Caco-2 (cell line): ENCODE measurements at regions of chr7 and their contacts with region 1.

Region 1: DNA sequence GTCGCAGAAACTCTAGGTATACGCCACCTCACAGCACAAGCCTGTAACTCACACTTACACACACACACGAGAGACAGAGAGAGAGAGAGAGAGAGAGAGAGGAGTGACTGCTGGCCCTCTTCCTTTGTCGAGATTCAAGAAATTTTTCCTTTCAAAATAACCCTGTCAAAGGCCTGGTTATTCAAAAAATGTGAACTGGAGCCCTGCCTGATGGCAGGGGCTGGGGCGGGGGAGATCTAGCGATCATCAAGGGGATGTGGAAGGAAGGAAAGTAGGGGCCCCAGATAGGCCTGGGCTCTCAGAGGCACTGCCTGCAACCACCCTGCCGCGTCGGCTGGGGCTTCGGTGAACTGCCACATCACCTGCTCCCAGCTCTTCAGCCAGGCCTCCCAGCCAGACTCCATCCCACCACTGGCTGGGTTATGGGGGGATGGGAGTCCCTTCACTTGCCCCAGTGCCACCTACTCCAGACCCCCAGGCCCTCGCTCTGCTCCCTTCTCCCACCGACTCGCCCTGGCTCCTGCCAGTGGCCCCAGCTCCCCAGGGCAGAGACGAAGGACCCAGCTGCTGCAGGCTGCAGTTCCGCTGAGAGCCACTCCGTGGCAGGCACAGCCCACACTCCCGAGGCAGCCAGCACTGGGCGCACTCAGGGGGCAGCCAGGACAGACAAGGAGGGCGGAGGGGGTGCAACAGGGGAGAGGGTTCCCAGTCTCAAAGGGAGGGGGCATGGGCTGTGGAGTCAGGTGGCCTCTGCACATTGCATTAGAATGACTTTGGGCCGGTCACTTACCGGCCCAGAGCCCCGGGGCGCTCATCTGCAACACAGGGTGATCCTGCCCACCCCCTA is 15.3 kb downstream of the KCNH2 start:
- DNase-seq: peak in 1 of 2 experiments; percentile 66
- H3K4me3 ChIP-seq: no peak overlapping the region
- H3K4me3 Mint-ChIP-seq: no peak overlapping the region
- H3K27ac Mint-ChIP-seq: no peak overlapping the region
- H3K4me1 ChIP-seq: no peaks in the 10 kb centered on the region
- H3K4me1 Mint-ChIP-seq: peaks cover 12% of the 10 kb centered on the region
- H3K27me3 ChIP-seq: no peaks in the 10 kb centered on the region
- H3K27me3 Mint-ChIP-seq: peaks cover 11% of the 10 kb centered on the region
- CTCF ChIP-seq: peak; percentile 89 to 96

Region 2: GRCh38 chr7:150909200-150909995 is 53.4 kb before region 1 on chr7:
- CTCF ChIA-PET with region 1: no interaction called
- POLR2A ChIA-PET with region 1: no interaction called
- intact Hi-C with region 1: no loop called
- DNase-seq: no peak
- H3K4me3 ChIP-seq: no peak overlapping the region
- H3K4me3 Mint-ChIP-seq: no peak overlapping the region
- H3K27ac Mint-ChIP-seq: no peak overlapping the region
- H3K4me1 ChIP-seq: no peaks in the 10 kb centered on the region
- H3K4me1 Mint-ChIP-seq: no peaks in the 10 kb centered on the region
- H3K27me3 ChIP-seq: no peaks in the 10 kb centered on the region
- H3K27me3 Mint-ChIP-seq: peaks cover 27% of the 10 kb centered on the region
- CTCF ChIP-seq: no peak

Region 3: GRCh38 chr7:150988230-150989226 is 25.8 kb after region 1 on chr7:
- CTCF ChIA-PET with region 1: interaction called, 8 read pairs
- POLR2A ChIA-PET with region 1: no interaction called
- intact Hi-C with region 1: loop called (anchors 1 kb)
- DNase-seq: peak in 1 of 2 experiments; percentile 39
- H3K4me3 ChIP-seq: no peak overlapping the region
- H3K4me3 Mint-ChIP-seq: no peak overlapping the region
- H3K27ac Mint-ChIP-seq: no peak overlapping the region
- H3K4me1 ChIP-seq: no peaks in the 10 kb centered on the region
- H3K4me1 Mint-ChIP-seq: no peaks in the 10 kb centered on the region
- H3K27me3 ChIP-seq: no peaks in the 10 kb centered on the region; the same call in 1 of the 2 replicates
- H3K27me3 Mint-ChIP-seq: no peaks in the 10 kb centered on the region
- CTCF ChIP-seq: peak; percentile 52 to 56

Region 4: DNA sequence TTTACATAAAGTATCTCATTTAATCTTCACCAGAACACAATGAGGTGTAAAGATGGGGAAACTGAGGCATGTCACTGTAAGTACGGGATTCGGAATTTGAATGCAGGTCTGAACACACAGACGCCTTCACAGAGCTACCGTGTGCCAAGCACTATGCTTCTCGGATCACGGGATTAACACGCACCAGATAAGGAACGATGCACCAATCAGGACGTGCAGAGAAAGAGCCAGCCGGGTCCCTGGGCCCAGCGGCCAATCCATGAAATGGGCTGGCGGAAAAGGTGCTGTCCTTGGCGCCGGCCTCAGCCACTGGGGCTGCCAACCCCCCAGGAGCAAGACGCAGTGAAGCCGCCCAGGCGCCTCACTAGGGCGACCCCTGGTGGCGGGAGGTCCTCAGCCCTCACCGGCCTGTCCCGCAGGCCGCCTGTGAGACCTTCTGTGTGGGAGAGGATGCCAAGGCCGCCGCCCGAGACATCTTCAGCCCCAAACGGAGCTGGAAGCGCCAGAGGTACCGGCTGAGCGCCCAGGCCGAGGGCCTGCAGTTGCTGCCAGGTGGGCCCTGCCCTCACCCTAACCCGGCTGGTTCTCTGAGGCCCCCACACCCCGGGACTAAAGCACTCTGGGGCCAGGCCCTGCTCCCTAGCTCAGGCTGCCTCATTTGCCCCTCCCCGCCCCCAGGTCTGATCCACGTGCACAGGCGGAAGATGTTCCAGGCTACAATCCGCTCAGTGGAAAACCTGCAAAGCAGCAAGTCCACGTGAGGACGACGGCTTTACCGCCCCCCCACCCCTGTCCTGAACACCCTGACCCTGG is 45.9 kb after region 1 on chr7:
- CTCF ChIA-PET with region 1: interaction called, 7 read pairs
- POLR2A ChIA-PET with region 1: no interaction called
- intact Hi-C with region 1: loop called (anchors 2 kb)
- DNase-seq: peak in 1 of 2 experiments; percentile 68
- H3K4me3 ChIP-seq: no peak overlapping the region
- H3K4me3 Mint-ChIP-seq: no peak overlapping the region
- H3K27ac Mint-ChIP-seq: no peak overlapping the region
- H3K4me1 ChIP-seq: peaks cover 23% of the 10 kb centered on the region
- H3K4me1 Mint-ChIP-seq: peaks cover 10% of the 10 kb centered on the region
- H3K27me3 ChIP-seq: no peaks in the 10 kb centered on the region
- H3K27me3 Mint-ChIP-seq: peaks cover 3% of the 10 kb centered on the region
- CTCF ChIP-seq: peak; percentile 43 to 59

Region 5: DNA sequence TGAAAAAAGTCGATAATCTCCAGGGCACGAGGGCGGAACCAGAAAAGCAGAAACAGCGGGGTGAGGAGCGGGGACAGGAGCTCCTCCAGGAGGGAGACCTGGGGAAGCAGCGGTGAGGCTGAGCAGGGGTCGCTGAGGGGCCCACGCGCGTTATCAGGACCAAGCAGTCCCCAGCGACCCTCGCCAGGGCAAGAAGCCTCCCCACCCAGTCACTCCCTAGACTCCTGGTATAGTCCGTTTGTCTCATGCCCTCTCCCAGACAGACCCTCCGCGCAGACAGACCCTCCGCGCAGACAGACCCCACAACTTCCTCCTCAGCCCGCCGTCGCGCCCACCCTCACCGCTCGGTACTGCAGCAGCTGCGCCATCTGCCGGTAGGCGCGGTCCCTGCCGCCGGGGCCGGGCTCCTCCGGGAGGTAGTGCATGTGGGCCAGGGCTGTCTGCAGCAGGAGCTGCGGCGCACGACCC is 55.2 kb after region 1 on chr7:
- CTCF ChIA-PET with region 1: interaction called, 40 read pairs
- POLR2A ChIA-PET with region 1: no interaction called
- intact Hi-C with region 1: loop called (anchors 1 kb)
- DNase-seq: peak; percentile 74 to 89
- H3K4me3 ChIP-seq: peak overlapping the region; percentile 33
- H3K4me3 Mint-ChIP-seq: peak overlapping the region; percentile 77
- H3K27ac Mint-ChIP-seq: peak overlapping the region; percentile 80
- H3K4me1 ChIP-seq: peaks cover 26% of the 10 kb centered on the region
- H3K4me1 Mint-ChIP-seq: peaks cover 12% of the 10 kb centered on the region
- H3K27me3 ChIP-seq: no peaks in the 10 kb centered on the region
- H3K27me3 Mint-ChIP-seq: peaks cover 6% of the 10 kb centered on the region
- CTCF ChIP-seq: peak; percentile 91 to 98

Region 6: DNA sequence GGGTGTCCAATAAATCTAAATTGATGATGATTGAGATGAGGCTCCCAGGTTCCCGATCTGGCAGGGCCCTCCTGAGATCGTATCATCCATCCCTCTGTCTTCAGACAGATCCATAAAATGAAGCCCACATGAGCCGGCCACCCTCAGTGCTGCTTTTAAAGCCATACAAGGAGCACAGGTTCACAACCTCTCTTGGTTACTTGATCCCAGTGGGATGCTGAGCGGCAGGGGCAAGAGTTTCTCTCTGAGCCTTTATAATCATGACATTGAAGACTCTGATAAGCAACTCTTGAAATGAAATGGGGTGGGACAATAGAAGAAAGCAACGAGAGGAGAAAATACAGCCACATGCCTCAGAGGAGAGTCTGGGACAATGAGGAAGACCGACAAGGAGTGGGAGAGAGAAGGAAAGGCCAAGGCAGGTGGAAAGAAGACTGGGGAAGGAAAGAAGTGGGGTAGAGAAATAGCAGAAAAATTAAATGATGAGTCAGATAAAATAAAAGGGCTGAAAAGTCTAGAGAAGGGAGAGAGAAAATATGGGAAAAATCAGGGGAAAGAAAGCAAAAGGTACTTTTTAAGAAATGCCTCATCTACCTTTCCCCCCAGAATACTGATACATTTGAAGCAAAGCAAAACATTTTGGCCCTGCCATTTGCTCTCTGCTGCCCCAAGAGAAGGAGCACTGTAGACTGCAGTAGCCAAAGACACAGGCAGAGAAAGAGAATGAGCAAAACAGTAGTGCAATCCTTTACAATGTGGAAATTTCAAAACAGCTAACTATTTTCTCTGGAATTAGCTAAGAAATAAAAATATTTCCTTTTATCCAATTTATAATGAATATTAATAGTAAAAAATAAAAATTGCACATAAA is 190.1 kb after region 1 on chr7:
- CTCF ChIA-PET with region 1: no interaction called
- POLR2A ChIA-PET with region 1: no interaction called
- intact Hi-C with region 1: no loop called
- DNase-seq: no peak
- H3K4me3 ChIP-seq: no peak overlapping the region
- H3K4me3 Mint-ChIP-seq: no peak overlapping the region
- H3K27ac Mint-ChIP-seq: no peak overlapping the region
- H3K4me1 ChIP-seq: no peaks in the 10 kb centered on the region
- H3K4me1 Mint-ChIP-seq: no peaks in the 10 kb centered on the region
- H3K27me3 ChIP-seq: peaks cover 1% of the 10 kb centered on the region; the same call in 1 of the 2 replicates
- H3K27me3 Mint-ChIP-seq: peaks cover 4% of the 10 kb centered on the region
- CTCF ChIP-seq: peak in 1 of 2 experiments; percentile 34